ENCODE measurements at regions of chr14 and their contacts with region 1.

Region 1: DNA sequence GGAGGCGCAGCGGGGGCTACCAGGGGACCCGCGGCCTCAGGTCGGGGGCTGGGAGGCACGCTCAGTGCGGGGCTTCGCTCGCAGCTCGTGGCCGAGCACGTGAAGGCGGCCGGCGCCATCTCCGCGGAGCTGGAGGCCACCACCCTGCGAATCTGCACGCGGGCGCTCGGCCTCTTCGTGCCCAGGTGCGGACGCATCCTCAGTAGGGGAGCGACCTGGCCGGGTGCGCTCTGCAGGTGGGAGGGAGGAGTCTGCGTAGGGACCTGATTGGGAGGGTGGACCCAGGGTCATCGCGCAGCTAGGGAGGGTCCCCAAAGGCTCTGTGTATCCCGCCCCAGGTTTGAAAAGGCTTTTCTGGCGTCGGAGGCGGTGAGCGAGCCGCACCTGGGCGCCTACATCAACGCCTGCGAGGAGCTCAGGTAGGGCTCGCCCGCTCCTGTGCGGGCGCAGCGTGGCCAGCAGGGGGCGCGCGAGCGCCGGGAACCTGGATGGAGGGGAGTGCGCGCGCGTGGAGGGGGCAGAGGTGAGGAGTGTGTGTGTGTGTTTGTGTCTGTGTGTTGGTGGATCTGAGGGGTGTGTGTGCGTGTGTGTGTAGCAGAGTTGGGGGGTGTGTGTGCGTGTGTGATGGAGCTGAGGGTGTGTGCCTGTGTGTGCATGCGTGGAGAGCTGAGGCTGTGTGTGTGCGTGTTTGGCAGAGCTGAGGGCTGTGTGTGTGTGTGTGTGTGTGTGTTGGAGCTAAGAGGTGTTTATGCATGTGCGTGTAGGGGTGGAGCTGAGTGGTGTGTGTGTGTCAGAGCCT is 10.3 kb downstream of the EXOC3L4 start:
- DNase-seq: peak; percentile 85
- H3K4me3 Mint-ChIP-seq: peak overlapping the region; percentile 72
- H3K27ac Mint-ChIP-seq: peak overlapping the region; percentile 47
- H3K4me1 Mint-ChIP-seq: peaks cover 17% of the 10 kb centered on the region
- H3K27me3 Mint-ChIP-seq: no peaks in the 10 kb centered on the region
- CTCF ChIP-seq: peak; percentile 97

Region 2: GRCh38 chr14:103078093-103078749 is 26.6 kb before region 1 on chr14:
- CTCF ChIA-PET with region 1: interaction called, 23 read pairs
- intact Hi-C with region 1: no loop called
- DNase-seq: peak; percentile 81
- H3K4me3 Mint-ChIP-seq: no peak overlapping the region
- H3K27ac Mint-ChIP-seq: no peak overlapping the region
- H3K4me1 Mint-ChIP-seq: peaks cover 9% of the 10 kb centered on the region
- H3K27me3 Mint-ChIP-seq: no peaks in the 10 kb centered on the region
- CTCF ChIP-seq: peak; percentile 74

Region 3: GRCh38 chr14:103141119-103141796 is 36.4 kb after region 1 on chr14:
- CTCF ChIA-PET with region 1: interaction called, 11 read pairs
- intact Hi-C with region 1: no loop called
- DNase-seq: peak; percentile 66
- H3K4me3 Mint-ChIP-seq: no peak overlapping the region
- H3K27ac Mint-ChIP-seq: no peak overlapping the region
- H3K4me1 Mint-ChIP-seq: peaks cover 41% of the 10 kb centered on the region
- H3K27me3 Mint-ChIP-seq: no peaks in the 10 kb centered on the region
- CTCF ChIP-seq: peak; percentile 59

Region 4: DNA sequence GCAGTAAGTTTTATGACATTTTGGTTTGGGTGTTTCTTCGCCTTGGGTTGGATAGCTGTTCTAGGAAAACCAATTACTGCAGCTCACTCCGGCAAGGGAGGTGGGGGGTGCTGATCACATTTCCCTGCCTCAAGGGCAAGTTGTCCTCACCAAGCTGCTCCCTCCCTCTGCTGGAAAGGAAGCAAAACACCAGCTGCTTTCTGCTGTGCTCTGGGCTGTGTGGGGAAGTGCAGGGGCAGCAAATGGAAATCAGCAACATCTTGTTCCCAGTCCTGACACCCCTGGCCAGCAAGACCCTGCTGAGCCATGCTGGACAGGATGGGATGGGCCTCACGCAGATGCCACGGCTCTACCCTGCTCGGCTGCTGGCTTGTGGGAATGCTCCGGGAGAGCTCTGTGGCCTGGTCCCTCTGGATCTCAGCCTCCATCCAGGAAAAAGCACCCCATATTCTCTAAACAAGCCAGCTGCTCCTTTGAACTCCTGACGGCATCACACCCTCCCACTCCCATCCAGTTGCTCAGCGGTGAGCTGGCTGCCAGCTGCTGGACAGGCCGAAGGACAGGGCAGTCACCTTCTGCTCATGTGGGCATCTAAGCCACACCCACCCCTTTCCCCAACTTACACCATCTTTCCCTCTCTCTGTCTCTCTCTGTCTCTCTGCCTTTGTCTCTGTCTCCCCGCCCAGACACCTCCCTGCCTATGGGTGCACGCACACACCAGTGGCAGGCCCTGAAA is 176.8 kb after region 1 on chr14:
- CTCF ChIA-PET with region 1: interaction called, 36 read pairs
- intact Hi-C with region 1: loop called (anchors 5 kb)
- DNase-seq: peak; percentile 71
- H3K4me3 Mint-ChIP-seq: no peak overlapping the region
- H3K27ac Mint-ChIP-seq: no peak overlapping the region
- H3K4me1 Mint-ChIP-seq: peaks cover 40% of the 10 kb centered on the region
- H3K27me3 Mint-ChIP-seq: no peaks in the 10 kb centered on the region
- CTCF ChIP-seq: peak; percentile 38

Region 5: GRCh38 chr14:103372603-103373304 is 267.9 kb after region 1 on chr14:
- CTCF ChIA-PET with region 1: interaction called, 10 read pairs
- intact Hi-C with region 1: no loop called
- DNase-seq: peak; percentile 68
- H3K4me3 Mint-ChIP-seq: peak overlapping the region; percentile 24
- H3K27ac Mint-ChIP-seq: no peak overlapping the region
- H3K4me1 Mint-ChIP-seq: peaks cover 10% of the 10 kb centered on the region
- H3K27me3 Mint-ChIP-seq: no peaks in the 10 kb centered on the region
- CTCF ChIP-seq: no peak